ENCODE measurements at regions of chr6 and their contacts with region 1.

Region 1: GRCh38 chr6:35391240-35391968 is 49.0 kb downstream of the PPARD start:
- DNase-seq: no peak
- ATAC-seq: no peak

Region 2: DNA sequence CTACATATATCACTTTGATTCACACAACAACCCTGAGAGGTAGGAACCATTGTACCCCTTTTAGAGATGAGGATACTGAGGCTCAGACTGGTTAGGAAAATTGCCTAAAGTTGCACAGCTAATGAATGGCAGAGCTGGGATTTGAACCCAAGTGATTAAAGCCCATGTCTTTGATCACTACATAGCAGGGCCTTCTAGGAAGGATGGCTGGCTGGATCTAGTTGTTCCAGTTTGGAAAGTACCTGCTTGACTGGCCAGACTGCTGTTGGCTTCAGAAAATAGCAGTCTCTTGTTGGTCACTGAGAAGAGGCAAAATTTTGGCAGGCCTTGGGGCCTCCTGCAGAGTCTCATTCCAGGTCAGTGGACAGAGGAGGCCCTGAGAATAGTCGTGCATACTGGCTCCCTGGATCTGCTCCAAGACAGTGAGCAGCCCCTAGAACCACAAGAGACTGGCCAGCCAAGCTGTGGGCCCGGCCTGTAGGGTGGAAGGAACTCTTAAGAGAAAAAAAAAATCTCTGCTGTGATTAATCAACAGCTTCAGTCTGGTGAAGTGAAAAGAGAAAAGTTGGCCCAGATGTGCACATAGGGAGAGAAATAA is 31.6 kb before region 1 on chr6:
- intact Hi-C with region 1: loop called (anchors 5 kb)
- DNase-seq: no peak
- ATAC-seq: peak; percentile 41

Measured in Right ventricle myocardium inferior (tissue), 1 donor.